Dorsolateral prefrontal cortex (tissue), 120 donors: ENCODE measurements at regions of chr2 and their contacts with region 1.

Region 1: DNA sequence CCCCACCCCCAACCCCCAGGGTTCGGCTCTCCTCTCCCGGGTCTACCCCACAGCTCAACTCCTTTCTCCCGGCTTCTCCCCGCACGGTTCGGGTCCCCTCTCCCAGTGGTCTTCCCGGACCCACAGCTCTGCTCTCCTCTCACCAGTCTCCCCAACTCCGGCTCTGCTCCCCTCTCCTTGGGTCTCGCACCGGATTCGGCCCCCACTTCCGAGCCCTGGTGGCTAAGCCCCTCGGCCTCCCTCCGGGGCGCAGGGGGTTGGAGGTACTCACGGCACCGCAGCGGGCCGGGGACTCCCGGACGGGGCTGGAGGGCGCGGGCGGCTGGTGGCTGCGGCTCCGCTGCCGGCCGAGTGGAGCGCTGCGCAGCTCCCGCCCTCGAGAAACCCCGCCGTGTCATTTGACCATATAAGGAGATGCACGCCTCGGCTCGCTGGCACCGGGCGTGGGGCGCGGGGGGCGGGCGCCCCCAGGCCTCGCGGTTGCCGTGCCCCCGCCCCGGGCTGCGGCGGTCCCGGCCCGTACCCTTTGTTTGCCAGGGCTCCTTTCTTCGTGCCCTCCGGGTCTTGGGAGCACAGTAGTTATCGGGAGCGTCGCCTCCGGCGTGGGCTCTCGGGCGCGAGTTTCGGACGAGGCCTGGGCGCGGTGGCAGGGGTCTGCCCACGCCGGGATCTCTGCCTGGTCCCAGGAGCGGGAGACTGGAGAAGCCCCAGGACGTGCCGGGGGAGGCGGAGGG is at the start of gene FHL2:
- DNase-seq: peak in 7 of 10 donors; percentile 40 to 70 (median 59)
- H3K4me3 ChIP-seq: peak within 1 kb of the TSS; percentile 28 to 77 (median 64)
- H3K27ac ChIP-seq: peak within 1 kb of the TSS in 49 of 59 donors; percentile 1 to 85 (median 69)
- H3K27me3 ChIP-seq: peaks cover 0 to 29% (median 6%) of the 10 kb centered on the region in 45 donors
- CTCF ChIP-seq: peak in 31 of 56 donors; percentile 6 to 49 (median 22)
- total RNA-seq, gene FHL2: 9.0 to 49.5 (median 29.1) TPM

Region 2: GRCh38 chr2:105417857-105418436 is 19.1 kb after region 1 on chr2:
- intact Hi-C with region 1: loop called in 1 of 2 experiments (anchors 2 kb)
- DNase-seq: no peak
- H3K4me3 ChIP-seq: no peak overlapping the region
- H3K27ac ChIP-seq: no peak overlapping the region
- H3K27me3 ChIP-seq: no peaks in the 10 kb centered on the region
- CTCF ChIP-seq: no peak